GM10248 (cell line): ENCODE measurements at regions of chr5 and their contacts with region 1.

Region 1: DNA sequence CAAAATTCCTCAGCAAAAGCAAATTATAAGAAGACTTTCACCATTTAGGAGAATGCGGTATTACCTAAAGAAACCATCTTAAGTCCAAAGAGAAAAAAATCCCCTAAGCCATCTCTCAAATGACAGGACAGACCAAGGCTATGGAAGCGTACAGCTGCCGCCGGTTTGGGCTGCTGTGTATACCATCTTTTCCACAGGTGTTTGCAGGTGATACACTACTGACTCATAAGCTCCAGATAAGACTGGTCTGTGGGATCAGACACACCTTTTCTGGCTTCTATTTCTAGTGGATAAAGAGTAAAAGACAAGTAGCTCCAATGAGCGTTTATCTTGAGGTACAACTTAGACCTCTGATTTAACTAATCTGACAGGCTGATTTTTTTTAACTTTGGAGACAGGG is 7.7 kb downstream of the CDKN2AIPNL start:
- DNase-seq: no peak
- CTCF ChIP-seq: no peak

Region 2: GRCh38 chr5:134370871-134371833 is 32.8 kb before region 1 on chr5 and contains the start of gene UBE2B:
- CTCF ChIA-PET with region 1: no interaction called
- POLR2A ChIA-PET with region 1: interaction called, 10 read pairs
- DNase-seq: peak; percentile 94
- CTCF ChIP-seq: no peak